GM18951 (cell line): ENCODE measurements at regions of chr15 and their contacts with region 1.

Region 1: GRCh38 chr15:63698692-63699091 is 101.5 kb downstream of the FBXL22 start:
- POLR2A ChIP-seq: no peak

Region 2: GRCh38 chr15:63233667-63234423 is 464.8 kb before region 1 on chr15:
- in situ Hi-C with region 1: no loop called
- POLR2A ChIP-seq: no peak

Region 3: GRCh38 chr15:63610200-63610841 is 88.4 kb before region 1 on chr15:
- in situ Hi-C with region 1: loop called (anchors 10 kb)
- POLR2A ChIP-seq: no peak

Region 4: DNA sequence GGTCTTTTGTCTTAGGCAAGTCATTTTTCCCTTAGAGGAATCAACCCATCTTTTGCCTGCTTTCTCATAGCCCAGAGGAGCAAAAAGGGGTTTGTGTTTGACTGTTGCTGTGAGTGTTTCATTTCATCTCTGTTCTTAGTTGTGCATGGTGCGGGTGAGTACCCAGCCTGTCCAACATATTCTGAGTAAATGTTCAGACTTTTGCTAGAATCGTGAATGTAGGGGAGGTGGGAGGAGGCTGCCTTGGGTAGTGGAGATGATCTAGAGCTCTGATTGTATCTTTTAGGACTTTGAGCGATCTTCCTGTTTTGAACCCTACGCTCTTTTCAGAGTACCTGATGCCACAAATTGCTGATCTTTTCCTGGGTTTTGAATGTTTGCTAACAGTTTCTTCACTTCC is 884.8 kb after region 1 on chr15:
- in situ Hi-C with region 1: no loop called
- POLR2A ChIP-seq: no peak